ENCODE measurements at regions of chr1 and their contacts with region 1.

Region 1: DNA sequence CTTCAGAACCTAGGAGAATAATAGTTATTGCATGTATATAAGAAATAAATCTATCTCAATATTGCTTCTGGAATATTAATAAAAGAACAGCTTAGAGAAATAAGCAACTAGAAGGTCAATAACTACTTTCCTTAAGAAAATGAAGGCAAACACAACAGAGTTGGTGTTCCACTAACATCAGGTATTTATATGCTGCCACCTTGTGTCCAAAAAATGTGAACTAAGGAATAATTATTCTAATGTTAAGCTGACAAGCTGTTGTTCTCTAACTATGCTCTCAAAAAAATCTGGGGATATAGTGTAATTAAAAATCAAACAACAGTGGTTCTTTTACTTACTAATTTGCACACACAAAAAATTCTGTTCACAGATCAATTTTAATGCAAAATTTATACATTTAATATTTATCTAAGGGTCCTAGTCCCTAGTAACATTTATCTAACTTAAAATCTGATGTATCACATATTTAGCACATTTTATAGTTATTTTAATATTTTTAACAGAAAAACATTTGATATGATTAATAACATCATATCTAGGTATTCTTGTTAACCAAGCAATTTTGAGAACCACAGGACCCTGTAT is 39.6 kb downstream of the UCHL5 start:
- DNase-seq: no peak
- ATAC-seq: peak; percentile 70 to 84 (median 74)
- H3K4me3 ChIP-seq: no peak overlapping the region
- H3K27ac ChIP-seq: no peak overlapping the region
- H3K4me1 ChIP-seq: peaks cover 0 to 7% (median 0%) of the 10 kb centered on the region in 4 donors
- H3K27me3 ChIP-seq: no peaks in the 10 kb centered on the region
- CTCF ChIP-seq: peak; percentile 48 to 62 (median 52)
- POLR2A ChIP-seq: no peak

Region 2: GRCh38 chr1:192808518-192809306 is 210.8 kb before region 1 on chr1 and contains the start of gene RGS2:
- intact Hi-C with region 1: loop called (anchors 5 to 10 kb)
- DNase-seq: peak; percentile 94 to 95 (median 94)
- ATAC-seq: peak; percentile 95 to 99 (median 98)
- H3K4me3 ChIP-seq: peak within 1 kb of the TSS; percentile 51 to 64 (median 60)
- H3K27ac ChIP-seq: peak within 1 kb of the TSS; percentile 75 to 83 (median 83)
- H3K4me1 ChIP-seq: peaks cover 0 to 5% (median 0%) of the 10 kb centered on the region in 4 donors
- H3K27me3 ChIP-seq: no peaks in the 10 kb centered on the region
- CTCF ChIP-seq: peak in 1 of 4 donors; percentile 27
- POLR2A ChIP-seq: peak; percentile 98
- total RNA-seq, gene RGS2: 2.5 to 10.9 (median 5.2) TPM